ENCODE measurements at regions of chr10 and their contacts with region 1.

Region 1: DNA sequence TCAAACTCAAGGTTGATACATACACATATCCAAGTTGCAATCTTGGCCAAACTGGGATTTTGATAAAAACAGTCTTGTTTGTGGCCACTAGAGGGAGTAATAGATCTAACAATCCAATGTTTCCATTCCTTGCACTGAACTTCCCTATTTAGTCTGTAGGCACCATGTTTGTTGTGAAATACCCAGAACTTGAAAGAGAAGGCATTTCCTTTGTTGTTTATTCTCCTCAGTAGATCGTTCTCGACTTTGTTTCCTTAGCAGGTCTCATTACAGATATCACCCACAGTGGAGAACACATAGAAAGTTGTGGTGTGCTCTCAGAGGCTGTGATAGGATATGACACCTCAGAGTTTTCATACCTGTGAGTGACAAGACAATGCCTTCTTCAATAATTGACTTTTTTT is 70.3 kb upstream of the MXI1 start:
- DNase-seq: peak; percentile 80 to 93 (median 90)
- H3K4me3 ChIP-seq: peak overlapping the region in 1 of 7 experiments; percentile 43
- H3K27ac ChIP-seq: no peak overlapping the region
- H3K4me1 ChIP-seq: peaks cover 12 to 20% (median 18%) of the 10 kb centered on the region in 4 experiments
- H3K27me3 ChIP-seq: peaks cover 0 to 2% (median 0%) of the 10 kb centered on the region in 5 experiments

Region 2: DNA sequence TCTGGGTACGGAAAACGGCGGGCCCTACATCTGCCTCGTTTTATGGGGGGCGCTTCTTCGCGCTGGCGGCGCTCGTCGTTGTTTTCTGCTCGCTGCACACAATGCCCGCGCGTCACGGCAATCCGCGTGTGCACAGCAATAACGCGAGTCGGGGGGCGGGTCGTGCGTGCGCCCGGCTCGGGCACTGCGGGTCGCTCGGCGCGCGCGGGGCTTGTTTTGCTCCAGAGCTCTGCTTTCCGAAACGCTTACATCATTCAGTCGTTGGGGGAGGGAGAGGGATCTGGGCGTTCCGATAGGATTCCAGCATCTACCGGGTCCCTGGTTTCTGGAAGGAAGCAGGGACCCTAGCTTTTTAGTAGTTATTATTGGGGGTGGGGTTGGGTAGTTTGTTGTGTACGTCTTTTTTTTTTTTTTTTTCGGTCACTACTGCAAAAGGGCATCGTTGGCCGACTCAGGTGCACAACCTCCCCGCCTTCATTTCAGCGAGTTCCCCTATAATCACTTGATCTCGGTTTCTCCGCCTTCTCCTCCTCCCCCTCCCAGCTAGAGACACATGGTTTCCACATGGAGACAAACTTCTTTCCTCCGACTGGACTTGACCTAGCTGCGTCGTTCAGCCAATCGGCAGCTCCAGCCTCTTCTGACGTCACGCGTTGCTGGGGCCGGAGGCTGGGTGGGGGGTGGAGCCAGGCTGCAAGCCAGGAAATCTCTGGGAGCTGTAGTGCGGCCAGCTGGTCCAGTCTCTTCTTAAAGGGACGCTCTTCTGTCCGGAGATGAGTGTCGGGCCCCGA is 73.7 kb after region 1 on chr10:
- CTCF ChIA-PET with region 1: interaction called, 15 read pairs
- POLR2A ChIA-PET with region 1: interaction called, 3 read pairs
- DNase-seq: peak; percentile 89 to 92 (median 90)
- H3K4me3 ChIP-seq: peak overlapping the region; percentile 37 to 84 (median 68)
- H3K27ac ChIP-seq: peak overlapping the region in 1 of 2 experiments; percentile 66
- H3K4me1 ChIP-seq: peaks cover 26 to 82% (median 69%) of the 10 kb centered on the region in 4 experiments
- H3K27me3 ChIP-seq: peaks cover 3 to 56% (median 25%) of the 10 kb centered on the region in 5 experiments

Region 3: GRCh38 chr10:110225756-110226542 is 88.8 kb after region 1 on chr10:
- CTCF ChIA-PET with region 1: interaction called, 44 read pairs
- POLR2A ChIA-PET with region 1: interaction called, 4 read pairs
- DNase-seq: peak; percentile 90 to 93 (median 93)
- H3K4me3 ChIP-seq: peak overlapping the region; percentile 71 to 95 (median 82)
- H3K27ac ChIP-seq: peak overlapping the region in 1 of 2 experiments; percentile 43
- H3K4me1 ChIP-seq: peaks cover 17 to 34% (median 23%) of the 10 kb centered on the region in 4 experiments
- H3K27me3 ChIP-seq: peaks cover 0 to 4% (median 0%) of the 10 kb centered on the region in 5 experiments

Region 4: GRCh38 chr10:110273474-110273873 is 136.3 kb after region 1 on chr10:
- CTCF ChIA-PET with region 1: interaction called, 72 read pairs
- POLR2A ChIA-PET with region 1: no interaction called
- DNase-seq: peak in 2 of 3 donors; percentile 33 to 48
- H3K4me3 ChIP-seq: no peak overlapping the region
- H3K27ac ChIP-seq: no peak overlapping the region
- H3K4me1 ChIP-seq: peaks cover 8 to 30% (median 10%) of the 10 kb centered on the region in 4 experiments
- H3K27me3 ChIP-seq: no peaks in the 10 kb centered on the region

Region 5: GRCh38 chr10:110285501-110285900 is 148.4 kb after region 1 on chr10:
- CTCF ChIA-PET with region 1: interaction called, 72 read pairs
- POLR2A ChIA-PET with region 1: no interaction called
- DNase-seq: no peak
- H3K4me3 ChIP-seq: no peak overlapping the region
- H3K27ac ChIP-seq: no peak overlapping the region
- H3K4me1 ChIP-seq: no peaks in the 10 kb centered on the region
- H3K27me3 ChIP-seq: no peaks in the 10 kb centered on the region

Measured in common myeloid progenitor, CD34-positive (primary cell).